Left ventricle myocardium inferior (tissue), 1 donor: ENCODE measurements at regions of chr11 and their contacts with region 1.

Region 1: GRCh38 chr11:93895106-93895862 is 44.9 kb upstream of the VSTM5 start:
- DNase-seq: no peak
- H3K4me3 ChIP-seq: no peak overlapping the region
- H3K27ac ChIP-seq: no peak overlapping the region
- H3K4me1 ChIP-seq: no peaks in the 10 kb centered on the region
- H3K27me3 ChIP-seq: peaks cover 26% of the 10 kb centered on the region
- CTCF ChIP-seq: peak; percentile 77

Region 2: GRCh38 chr11:94504689-94505293 is 609.5 kb after region 1 on chr11:
- intact Hi-C with region 1: loop called (anchors 10 kb)
- DNase-seq: no peak
- H3K4me3 ChIP-seq: no peak overlapping the region
- H3K27ac ChIP-seq: no peak overlapping the region
- H3K4me1 ChIP-seq: no peaks in the 10 kb centered on the region
- H3K27me3 ChIP-seq: no peaks in the 10 kb centered on the region
- CTCF ChIP-seq: peak; percentile 79